ENCODE measurements at regions of chr13 and their contacts with region 1.

Region 1: DNA sequence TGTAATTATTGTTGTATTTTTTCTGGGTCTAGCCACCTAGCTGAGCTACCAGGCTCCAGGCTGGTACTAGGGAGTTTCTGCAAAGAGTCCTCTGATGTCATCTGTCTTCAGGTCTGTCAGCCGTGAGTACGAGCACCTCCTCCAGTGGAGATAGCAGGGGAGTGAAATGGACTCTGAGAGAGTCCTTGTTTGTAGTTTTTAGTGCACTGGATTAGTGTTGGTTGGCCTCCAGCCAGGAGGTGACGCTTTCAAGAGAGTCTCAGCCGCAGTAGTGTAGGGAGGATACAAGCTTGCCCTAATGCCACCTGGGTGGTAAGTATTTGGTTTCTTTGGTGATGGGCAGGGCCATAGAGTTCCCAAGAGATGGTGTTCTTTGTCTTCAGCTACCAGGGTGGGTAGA is 384.8 kb downstream of the SLC7A1 start:
- DNase-seq: no peak
- ATAC-seq: no peak
- H3K4me3 ChIP-seq: no peak overlapping the region
- H3K27ac ChIP-seq: no peak overlapping the region
- H3K4me1 ChIP-seq: no peaks in the 10 kb centered on the region
- H3K27me3 ChIP-seq: no peaks in the 10 kb centered on the region

Region 2: DNA sequence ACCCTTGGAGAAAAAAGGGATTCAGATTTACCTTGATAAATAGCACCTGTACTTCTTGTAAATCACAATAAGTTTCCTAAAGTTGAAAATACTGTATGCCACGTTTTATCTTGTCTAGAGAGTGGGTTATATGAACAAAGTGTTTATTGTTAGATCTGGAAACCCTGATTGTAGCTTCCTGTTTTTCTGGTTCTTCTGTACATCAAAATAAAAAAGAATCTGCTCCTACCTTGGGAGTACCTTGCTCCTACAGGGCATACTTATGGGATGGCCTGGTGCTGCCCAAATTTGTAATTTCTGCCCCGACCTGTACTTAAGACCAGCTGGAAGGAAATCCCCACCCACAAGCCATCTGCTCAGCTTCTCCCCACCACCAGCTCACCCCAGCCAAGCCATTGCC is 143.7 kb after region 1 on chr13:
- intact Hi-C with region 1: loop called in 2 of 4 experiments (anchors 5 kb)
- DNase-seq: no peak
- ATAC-seq: no peak
- H3K4me3 ChIP-seq: no peak overlapping the region
- H3K27ac ChIP-seq: no peak overlapping the region
- H3K4me1 ChIP-seq: no peaks in the 10 kb centered on the region
- H3K27me3 ChIP-seq: no peaks in the 10 kb centered on the region